ENCODE measurements at regions of chr3 and their contacts with region 1.

Region 1: GRCh38 chr3:8441969-8442559 is 59.6 kb upstream of the LMCD1 start:
- DNase-seq: peak in 1 of 2 donors; percentile 55
- ATAC-seq: peak in 7 of 8 donors; percentile 33 to 59 (median 49)
- H3K4me3 ChIP-seq: no peak overlapping the region
- H3K27ac ChIP-seq: peak overlapping the region in 3 of 10 donors; percentile 8 to 84 (median 44)
- H3K4me1 ChIP-seq: peaks cover 5 to 55% (median 38%) of the 10 kb centered on the region in 9 donors
- H3K27me3 ChIP-seq: no peaks in the 10 kb centered on the region
- CTCF ChIP-seq: peak; percentile 60 to 86 (median 76)

Region 2: GRCh38 chr3:8482960-8483665 is 41.0 kb after region 1 on chr3:
- intact Hi-C with region 1: loop called in 3 of 10 experiments (anchors 5 kb)
- DNase-seq: peak; percentile 25 to 77
- ATAC-seq: peak; percentile 72 to 93 (median 89)
- H3K4me3 ChIP-seq: no peak overlapping the region
- H3K27ac ChIP-seq: peak overlapping the region; percentile 32 to 86 (median 66)
- H3K4me1 ChIP-seq: peaks cover 8 to 47% (median 30%) of the 10 kb centered on the region in 9 donors
- H3K27me3 ChIP-seq: no peaks in the 10 kb centered on the region
- CTCF ChIP-seq: no peak

Region 3: GRCh38 chr3:8501371-8502131 is 59.5 kb after region 1 on chr3 and contains the start of gene LMCD1:
- intact Hi-C with region 1: loop called in 4 of 10 experiments (anchors 5 to 10 kb)
- DNase-seq: peak; percentile 95 to 97
- ATAC-seq: peak; percentile 96 to 100 (median 97)
- H3K4me3 ChIP-seq: peak within 1 kb of the TSS; percentile 19 to 74 (median 56)
- H3K27ac ChIP-seq: peak within 1 kb of the TSS; percentile 58 to 97 (median 92)
- H3K4me1 ChIP-seq: peaks cover 10 to 80% (median 63%) of the 10 kb centered on the region in 9 donors
- H3K27me3 ChIP-seq: peaks cover 0 to 9% (median 0%) of the 10 kb centered on the region in 7 donors
- CTCF ChIP-seq: peak in 7 of 9 donors; percentile 12 to 56 (median 42)
- total RNA-seq, gene LMCD1: 28.2 to 75.7 (median 45.7) TPM

Region 4: DNA sequence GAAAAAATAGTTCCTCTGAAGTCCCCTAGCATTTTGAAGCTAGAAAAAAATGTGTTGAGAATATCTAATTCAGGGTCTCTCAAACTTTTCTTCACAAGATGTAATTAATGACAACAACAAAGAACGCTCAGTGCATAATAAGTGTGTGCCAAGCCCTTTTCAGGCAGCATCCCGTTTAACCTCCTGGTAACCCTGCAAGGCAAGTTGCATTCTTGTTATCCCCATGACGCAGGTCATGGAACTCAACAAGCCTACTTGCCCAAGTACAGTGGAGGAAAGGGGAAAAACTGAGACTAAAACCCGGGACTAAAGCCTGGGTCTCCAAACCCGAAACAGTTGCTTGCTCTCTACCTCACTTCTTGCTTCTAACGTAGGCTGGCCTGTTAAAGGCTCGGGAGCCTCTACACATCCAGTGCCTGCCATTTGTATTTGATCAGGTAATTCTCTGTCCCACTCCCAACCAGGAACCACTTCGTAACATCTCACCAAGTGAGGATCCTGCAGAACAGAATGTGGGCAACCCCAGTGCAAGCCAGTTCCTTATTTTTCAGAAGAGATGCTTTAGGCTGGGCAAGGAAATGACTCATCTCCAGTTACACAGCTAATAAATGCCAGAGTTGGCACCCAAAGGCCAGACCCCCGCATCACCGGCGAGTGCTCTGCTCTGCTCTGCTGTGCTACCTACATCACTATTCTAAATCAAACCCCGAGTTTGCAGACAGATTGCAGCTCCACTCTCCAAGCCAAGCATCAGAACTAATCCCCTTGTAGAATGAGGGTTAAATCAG is 87.9 kb after region 1 on chr3:
- intact Hi-C with region 1: loop called in 1 of 10 experiments (anchors 10 kb)
- DNase-seq: no peak
- ATAC-seq: no peak
- H3K4me3 ChIP-seq: no peak overlapping the region
- H3K27ac ChIP-seq: peak overlapping the region in 9 of 10 donors; percentile 12 to 71 (median 51)
- H3K4me1 ChIP-seq: peaks cover 11 to 97% (median 66%) of the 10 kb centered on the region in 9 donors
- H3K27me3 ChIP-seq: no peaks in the 10 kb centered on the region
- CTCF ChIP-seq: no peak

Region 5: DNA sequence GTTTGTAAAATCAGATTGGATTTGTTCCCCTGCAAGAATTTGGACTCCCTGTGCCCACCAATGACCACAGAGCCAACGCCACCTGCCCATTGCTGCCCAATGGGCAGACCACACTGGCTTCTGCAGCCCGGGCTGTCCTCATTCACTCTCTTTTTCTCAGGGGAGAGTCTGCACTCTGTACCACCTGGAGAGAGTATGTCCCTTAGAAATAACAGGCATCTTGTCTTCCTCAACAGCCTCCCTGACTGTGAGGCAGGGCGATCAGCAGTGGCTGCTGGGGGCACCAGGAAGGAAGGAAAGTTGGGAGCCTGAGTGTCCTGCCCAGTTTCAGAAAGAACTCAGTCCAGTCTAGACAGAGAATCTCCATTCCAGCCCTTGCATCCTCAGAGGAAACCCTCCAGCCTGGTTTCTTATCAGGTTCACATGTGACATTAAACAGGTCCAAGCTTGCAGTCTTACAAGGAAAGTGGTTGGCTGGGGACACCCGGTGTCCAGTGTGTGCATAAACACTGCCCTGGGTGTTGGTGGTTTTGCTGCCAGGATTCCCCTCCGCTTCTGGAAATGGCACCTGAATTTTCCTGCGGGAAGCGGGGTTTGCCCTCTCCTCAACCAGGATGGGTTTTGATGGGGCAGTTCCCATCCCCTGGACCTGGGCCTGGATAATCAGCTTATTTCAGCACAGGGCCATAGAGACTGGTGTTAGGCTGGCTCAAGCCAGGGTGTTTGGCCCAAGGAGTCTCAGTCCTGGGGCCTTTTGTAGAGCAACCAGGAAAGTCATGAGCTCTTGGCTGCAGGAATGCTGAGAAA is 165.4 kb after region 1 on chr3:
- intact Hi-C with region 1: loop called (anchors 1 to 5 kb)
- DNase-seq: peak; percentile 64 to 80
- ATAC-seq: peak; percentile 94 to 99 (median 97)
- H3K4me3 ChIP-seq: no peak overlapping the region
- H3K27ac ChIP-seq: peak overlapping the region in 1 of 10 donors; percentile 59
- H3K4me1 ChIP-seq: peaks cover 11 to 28% (median 17%) of the 10 kb centered on the region in 9 donors
- H3K27me3 ChIP-seq: no peaks in the 10 kb centered on the region
- CTCF ChIP-seq: peak; percentile 61 to 88 (median 79)

Region 6: DNA sequence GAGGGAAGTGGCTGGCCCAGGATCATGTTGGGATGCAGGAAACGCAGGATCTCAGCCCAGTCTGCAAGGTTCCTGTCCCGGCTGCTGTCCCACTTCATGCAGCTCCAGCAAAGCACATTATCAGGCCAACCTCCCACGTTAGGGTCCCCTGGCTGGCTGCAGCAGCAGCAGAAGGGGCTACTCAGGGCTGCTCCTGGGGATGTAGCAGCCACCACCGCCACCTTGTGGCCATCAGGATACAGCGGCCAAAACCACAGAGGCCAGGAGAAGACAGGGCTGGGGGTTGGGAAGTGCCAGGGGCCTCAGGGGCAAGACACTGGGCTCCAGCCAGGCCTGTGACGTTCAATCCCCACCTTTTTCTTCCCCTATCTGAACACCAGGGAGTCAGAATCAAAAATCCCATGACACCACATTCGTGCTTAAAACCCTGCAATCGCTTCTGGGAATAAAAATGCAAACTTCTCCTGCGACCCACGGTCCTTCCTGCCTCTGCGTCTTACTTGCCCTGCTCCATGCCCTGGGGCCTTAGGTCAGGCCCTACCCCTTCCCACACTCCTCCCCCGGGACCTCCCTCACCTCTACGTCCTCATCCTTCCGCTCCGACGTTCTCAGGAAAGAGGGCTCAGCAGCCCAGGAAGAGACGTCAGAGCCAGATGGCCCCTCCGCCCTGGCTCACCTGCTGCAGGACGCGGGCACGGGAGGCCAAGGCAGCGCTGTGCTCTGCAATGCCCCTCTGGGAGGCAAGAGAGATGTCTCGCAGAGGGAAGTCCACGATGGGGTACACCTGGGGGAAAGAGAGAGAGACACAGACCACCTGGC is 181.0 kb after region 1 on chr3:
- intact Hi-C with region 1: loop called in 8 of 10 experiments (anchors 1 to 5 kb)
- DNase-seq: peak; percentile 61 to 74
- ATAC-seq: peak; percentile 82 to 92 (median 86)
- H3K4me3 ChIP-seq: peak overlapping the region in 2 of 10 donors; percentile 18
- H3K27ac ChIP-seq: no peak overlapping the region
- H3K4me1 ChIP-seq: peaks cover 6 to 20% (median 12%) of the 10 kb centered on the region in 9 donors
- H3K27me3 ChIP-seq: no peaks in the 10 kb centered on the region
- CTCF ChIP-seq: peak; percentile 75 to 94 (median 91)